ENCODE measurements at regions of chr14 and their contacts with region 1.

Region 1: GRCh38 chr14:95098984-95099599 is 58.2 kb downstream of the DICER1 start:
- DNase-seq: peak; percentile 72 to 78
- H3K4me3 ChIP-seq: no peak overlapping the region
- H3K27ac ChIP-seq: no peak overlapping the region
- H3K4me1 ChIP-seq: peaks cover 6% of the 10 kb centered on the region in 2 donors
- H3K27me3 ChIP-seq: no peaks in the 10 kb centered on the region
- CTCF ChIP-seq: peak in 5 of 6 experiments; percentile 50 to 77 (median 53)
- POLR2A ChIP-seq: no peak

Region 2: DNA sequence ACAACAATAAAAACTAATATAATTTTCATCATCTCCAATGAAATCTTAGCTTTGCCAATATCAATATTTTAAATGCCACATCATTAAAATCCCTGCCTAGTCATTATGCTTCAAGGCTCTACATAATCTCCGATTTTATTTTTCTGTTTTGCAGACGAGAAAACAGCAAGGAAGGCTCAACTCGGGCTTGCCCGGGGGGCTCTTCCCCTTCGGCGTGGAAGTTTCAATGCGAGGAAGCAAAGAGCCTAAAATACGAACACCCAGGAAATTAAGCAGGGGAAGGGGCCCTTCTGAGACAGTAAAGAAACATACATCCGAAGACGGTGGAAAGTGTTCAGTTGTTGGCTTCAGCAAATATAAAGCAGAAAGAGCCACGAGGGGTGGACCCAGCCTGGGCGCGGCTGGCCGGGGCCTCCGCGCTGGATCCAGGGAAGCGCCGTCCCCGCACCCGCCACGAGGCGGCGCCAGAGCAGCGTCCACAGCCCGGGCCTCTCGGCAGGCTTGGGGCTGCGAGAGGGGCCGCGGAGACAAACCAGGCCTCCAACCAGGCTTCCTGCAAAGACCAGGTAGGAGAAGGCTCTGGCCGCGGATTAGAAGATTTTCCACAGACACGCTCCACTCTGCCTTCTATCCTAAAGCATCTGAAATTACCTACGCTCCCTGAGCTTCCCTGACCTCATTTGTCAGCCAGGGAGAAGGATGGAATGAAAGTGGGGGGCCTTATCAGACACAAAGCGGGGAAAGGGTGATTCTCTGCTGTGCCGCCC is 409.7 kb before region 1 on chr14:
- intact Hi-C with region 1: loop called (anchors 10 kb)
- DNase-seq: peak; percentile 53 to 57
- H3K4me3 ChIP-seq: no peak overlapping the region
- H3K27ac ChIP-seq: no peak overlapping the region
- H3K4me1 ChIP-seq: peaks cover 0 to 5% of the 10 kb centered on the region in 2 donors
- H3K27me3 ChIP-seq: no peaks in the 10 kb centered on the region
- CTCF ChIP-seq: peak; percentile 71 to 98 (median 88)
- POLR2A ChIP-seq: no peak

Region 3: DNA sequence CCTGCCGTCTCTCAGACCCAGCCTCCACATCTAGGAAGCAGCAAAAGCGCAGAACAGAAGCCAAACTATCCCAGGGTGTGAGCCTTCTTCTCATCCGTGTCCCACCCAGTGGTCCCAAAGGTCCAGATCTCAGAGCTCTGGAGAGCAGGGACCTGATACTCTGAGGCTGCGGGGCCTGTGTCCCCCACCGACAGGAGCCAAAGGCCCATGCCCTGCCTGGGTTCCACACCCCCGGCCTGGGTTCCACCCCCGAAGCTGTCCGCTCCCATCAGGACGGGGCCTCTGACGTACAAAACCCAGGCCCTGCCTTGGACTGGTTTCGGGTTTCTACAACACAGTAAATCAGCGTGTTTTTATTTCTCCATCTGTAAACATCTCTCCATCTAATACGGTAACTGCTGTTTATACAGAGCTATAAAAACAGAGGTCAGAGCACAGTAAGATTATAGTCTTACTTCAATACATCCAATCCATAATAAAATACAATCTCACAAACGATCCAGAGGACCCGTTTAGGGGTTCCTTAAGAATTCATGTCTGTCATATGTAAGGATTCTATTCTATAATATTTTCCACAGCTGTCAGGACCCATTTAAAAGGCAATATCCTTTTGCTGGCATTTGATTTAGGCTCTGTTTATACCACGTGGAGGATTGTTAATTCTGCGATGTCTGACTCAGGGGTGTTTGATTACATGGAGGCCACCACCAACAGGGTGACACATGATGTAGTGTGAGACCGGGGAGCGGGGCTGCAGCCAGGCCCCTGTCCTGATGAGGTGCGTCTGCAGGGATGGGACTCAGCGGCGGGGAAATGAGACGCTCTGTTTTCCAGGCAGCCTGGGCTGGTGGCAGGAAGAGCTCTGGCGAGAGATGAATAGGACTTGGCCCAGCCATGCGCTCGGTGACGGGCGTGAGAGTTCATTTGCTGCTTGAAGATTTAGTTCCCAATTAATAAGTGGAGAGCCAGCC is 52.1 kb before region 1 on chr14:
- intact Hi-C with region 1: no loop called
- DNase-seq: no peak
- H3K4me3 ChIP-seq: no peak overlapping the region
- H3K27ac ChIP-seq: no peak overlapping the region
- H3K4me1 ChIP-seq: no peaks in the 10 kb centered on the region
- H3K27me3 ChIP-seq: no peaks in the 10 kb centered on the region
- CTCF ChIP-seq: no peak
- POLR2A ChIP-seq: no peak